ENCODE measurements at regions of chr16 and their contacts with region 1.

Region 1: DNA sequence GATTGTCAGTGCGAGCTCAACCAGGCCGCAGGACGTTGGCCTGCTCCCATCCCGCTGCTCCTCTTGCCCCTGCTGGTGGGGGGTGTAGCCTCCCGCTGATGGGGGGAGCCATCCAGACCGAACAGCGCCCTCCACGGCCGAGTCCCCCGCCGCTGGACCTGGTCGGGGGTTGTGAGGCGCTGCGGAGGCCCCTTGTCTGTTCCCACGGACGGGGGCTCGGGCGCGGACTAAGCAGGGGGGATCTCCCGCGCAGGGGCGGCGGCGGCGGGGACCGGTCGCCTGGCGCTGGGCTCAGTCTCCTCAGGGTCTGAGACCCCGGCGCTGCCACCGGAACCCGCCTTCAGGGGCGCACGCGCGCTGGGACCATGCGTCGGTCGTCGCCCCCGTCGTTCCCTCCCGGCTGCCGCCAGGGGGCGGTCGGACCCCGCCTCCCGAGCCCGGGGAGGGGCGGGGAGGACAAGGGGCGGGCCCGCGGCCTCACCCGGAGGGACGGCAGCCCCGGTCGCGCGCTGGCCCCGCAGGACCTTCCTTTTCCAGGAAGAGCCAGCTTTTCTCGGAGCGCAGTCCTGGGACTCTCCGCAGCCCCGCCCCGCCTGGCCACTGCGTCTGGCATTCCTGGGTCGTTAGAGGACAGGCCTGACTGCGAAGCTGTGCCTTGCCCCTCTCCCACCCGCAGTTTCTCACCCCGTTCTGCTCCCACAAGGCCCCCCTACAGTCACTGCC is 6.3 kb upstream of the IL32 start:
- DNase-seq: peak; percentile 64 to 96
- H3K4me3 ChIP-seq: peak overlapping the region; percentile 39 to 86 (median 67)
- H3K27ac ChIP-seq: no peak overlapping the region
- H3K4me1 ChIP-seq: peaks cover 5 to 19% (median 6%) of the 10 kb centered on the region in 4 experiments; a peak in 6 of 7 replicates
- H3K27me3 ChIP-seq: no peaks in the 10 kb centered on the region; a peak in 1 of 7 replicates
- CTCF ChIP-seq: peak; percentile 79 to 99 (median 88)
- EP300 ChIP-seq: 0 out of 3 replicates have a peak, but pooled peaks of 1 of the 2 experiments have one; percentile 53
- POLR2A ChIP-seq: peak in 1 of 2 experiments; percentile 39; a peak in 1 of 3 replicates
- RAD21 ChIP-seq: peak; percentile 81 to 95

Region 2: GRCh38 chr16:2701713-2702432 is 357.3 kb before region 1 on chr16:
- CTCF ChIA-PET with region 1: no interaction called
- POLR2A ChIA-PET with region 1: no interaction called
- DNase-seq: no peak
- H3K4me3 ChIP-seq: no peak overlapping the region
- H3K27ac ChIP-seq: no peak overlapping the region
- H3K4me1 ChIP-seq: no peaks in the 10 kb centered on the region
- H3K27me3 ChIP-seq: no peaks in the 10 kb centered on the region
- CTCF ChIP-seq: no peak
- EP300 ChIP-seq: no peak
- POLR2A ChIP-seq: no peak
- RAD21 ChIP-seq: no peak

Region 3: DNA sequence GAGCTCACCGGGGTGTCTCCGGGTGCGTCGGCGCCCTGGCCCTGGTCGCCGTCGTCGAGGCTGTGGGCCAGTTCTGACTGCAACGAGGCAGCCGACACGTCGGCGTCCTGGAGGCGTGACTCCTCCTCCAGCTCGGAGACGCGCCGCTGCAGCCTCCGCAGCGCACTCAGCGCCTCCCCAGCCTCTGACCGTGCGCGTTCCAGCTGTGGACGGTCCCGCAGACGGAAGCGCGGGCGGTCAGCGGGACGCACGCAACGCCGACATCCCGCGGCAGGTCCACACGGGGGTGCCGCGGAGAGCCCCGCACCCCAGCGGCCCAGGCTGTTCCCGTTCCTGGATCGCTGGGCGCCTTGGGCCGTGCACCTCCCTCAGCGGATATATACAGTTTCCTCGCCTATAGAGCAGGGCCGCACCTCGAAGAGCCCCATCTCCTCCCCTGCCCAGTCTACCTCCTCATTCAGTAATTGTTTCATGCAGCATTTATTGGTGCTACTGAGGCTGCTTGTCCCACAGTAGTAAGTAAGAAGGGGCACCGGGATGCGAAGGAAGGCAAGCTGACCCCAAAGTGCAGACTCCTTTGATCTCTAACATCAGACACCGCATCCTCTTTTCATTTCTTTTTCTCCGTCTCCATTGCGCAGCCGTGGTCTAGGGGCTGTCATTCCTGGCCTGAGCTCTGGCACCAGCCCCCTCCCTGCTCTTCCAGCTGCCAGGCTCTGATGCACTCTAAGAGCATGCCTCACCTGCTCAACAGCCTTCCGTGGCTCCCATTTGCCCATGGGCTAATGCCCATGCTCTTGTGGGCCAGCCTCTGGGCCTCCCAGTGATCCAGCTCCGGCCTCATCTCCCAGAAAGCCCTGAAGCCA is 29.4 kb before region 1 on chr16:
- CTCF ChIA-PET with region 1: interaction called, 88 read pairs
- POLR2A ChIA-PET with region 1: interaction called, 43 read pairs
- DNase-seq: peak in 1 of 2 experiments; percentile 41
- H3K4me3 ChIP-seq: no peak overlapping the region
- H3K27ac ChIP-seq: no peak overlapping the region
- H3K4me1 ChIP-seq: peaks cover 0 to 8% (median 6%) of the 10 kb centered on the region in 4 experiments; a peak in 5 of 7 replicates
- H3K27me3 ChIP-seq: no peaks in the 10 kb centered on the region
- CTCF ChIP-seq: no peak
- EP300 ChIP-seq: no peak
- POLR2A ChIP-seq: no peak
- RAD21 ChIP-seq: no peak

Region 4: GRCh38 chr16:3045357-3045728 is 13.8 kb before region 1 on chr16:
- CTCF ChIA-PET with region 1: interaction called, 25 read pairs
- POLR2A ChIA-PET with region 1: interaction called, 14 read pairs
- DNase-seq: peak in 1 of 2 experiments; percentile 73
- H3K4me3 ChIP-seq: peak overlapping the region; percentile 66 to 89 (median 80)
- H3K27ac ChIP-seq: no peak overlapping the region; the same call in 1 of the 2 replicates
- H3K4me1 ChIP-seq: peaks cover 0 to 3% (median 0%) of the 10 kb centered on the region in 4 experiments; a peak in 3 of 7 replicates
- H3K27me3 ChIP-seq: peaks cover 0 to 8% (median 3%) of the 10 kb centered on the region in 4 experiments; a peak in 6 of 7 replicates
- CTCF ChIP-seq: no peak
- EP300 ChIP-seq: no peak
- POLR2A ChIP-seq: no peak
- RAD21 ChIP-seq: no peak

Region 5: DNA sequence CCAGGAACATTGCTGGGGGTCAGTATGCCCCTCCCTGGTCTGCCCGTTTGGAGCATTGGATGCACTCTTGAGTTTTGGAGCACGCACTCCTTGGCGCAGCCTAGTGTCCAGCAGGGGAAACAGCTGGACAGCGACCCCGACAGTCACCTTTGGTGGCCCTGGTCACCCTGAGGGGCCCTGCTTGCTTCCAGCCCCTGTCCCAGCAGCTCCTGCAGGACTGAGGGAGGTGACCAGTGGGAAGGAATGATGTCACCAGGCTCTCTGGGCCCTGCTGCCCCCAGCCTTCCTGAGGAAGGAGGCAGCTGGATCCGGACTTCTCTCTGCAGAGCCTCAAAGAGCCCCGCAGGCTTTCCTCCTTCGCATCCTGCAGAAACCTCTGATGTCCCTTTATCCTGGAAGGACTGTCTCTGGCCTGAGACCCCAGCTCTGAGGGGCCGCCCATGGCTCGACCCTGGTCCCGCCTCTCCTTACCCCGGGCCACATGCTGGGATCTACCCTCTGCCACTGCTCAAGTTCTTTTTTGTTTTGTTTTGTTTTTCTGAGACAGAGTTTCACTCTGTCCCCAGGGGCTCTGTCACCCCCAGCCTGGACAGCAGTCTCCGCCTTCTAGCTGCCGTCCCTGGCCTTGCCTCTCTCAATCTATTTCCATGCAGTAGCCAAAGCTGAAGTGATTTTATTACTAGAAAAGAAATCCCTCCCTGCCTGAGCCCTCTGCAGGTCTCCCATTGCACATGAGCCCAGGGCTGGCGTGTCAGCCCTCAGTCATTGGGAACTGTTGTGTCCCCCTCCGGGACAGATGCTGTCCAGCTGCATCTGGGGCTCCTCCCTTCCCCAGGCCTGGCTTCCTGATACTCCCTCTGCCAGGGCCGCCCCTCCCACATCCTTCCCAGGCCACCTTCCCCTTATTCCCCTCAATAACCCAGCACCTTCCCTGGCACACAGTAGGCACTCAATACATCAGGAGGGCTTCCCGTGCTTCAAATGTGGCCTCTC is 28.4 kb after region 1 on chr16:
- CTCF ChIA-PET with region 1: interaction called, 30 read pairs
- POLR2A ChIA-PET with region 1: interaction called, 21 read pairs
- DNase-seq: no peak
- H3K4me3 ChIP-seq: no peak overlapping the region
- H3K27ac ChIP-seq: no peak overlapping the region; the same call in 1 of the 2 replicates
- H3K4me1 ChIP-seq: peaks cover 0 to 6% (median 5%) of the 10 kb centered on the region in 4 experiments; a peak in 6 of 7 replicates
- H3K27me3 ChIP-seq: no peaks in the 10 kb centered on the region
- CTCF ChIP-seq: peak; percentile 55 to 67 (median 65)
- EP300 ChIP-seq: no peak
- POLR2A ChIP-seq: peak in 1 of 2 experiments; percentile 72; a peak in 2 of 3 replicates
- RAD21 ChIP-seq: peak; percentile 25 to 51; a peak in 3 of 4 replicates

Region 6: GRCh38 chr16:3112058-3112880 is 53.1 kb after region 1 on chr16 and contains the start of gene ZNF205:
- CTCF ChIA-PET with region 1: interaction called, 20 read pairs
- POLR2A ChIA-PET with region 1: interaction called, 3 read pairs
- DNase-seq: peak in 1 of 2 experiments; percentile 92
- H3K4me3 ChIP-seq: peak within 1 kb of the TSS; percentile 85 to 93 (median 92)
- H3K27ac ChIP-seq: peak within 1 kb of the TSS; percentile 51; the same call in 1 of the 2 replicates
- H3K4me1 ChIP-seq: peaks cover 0 to 15% (median 8%) of the 10 kb centered on the region in 4 experiments; a peak in 5 of 7 replicates
- H3K27me3 ChIP-seq: no peaks in the 10 kb centered on the region
- CTCF ChIP-seq: 0 out of 4 replicates have a peak, but pooled peaks of 1 of the 3 experiments have one; percentile 14
- EP300 ChIP-seq: peak in 1 of 2 experiments; percentile 79; a peak in 1 of 3 replicates
- POLR2A ChIP-seq: no peak
- RAD21 ChIP-seq: peak; percentile 17 to 36; a peak in 2 of 4 replicates
- total RNA-seq, gene ZNF205: 17.0 and 19.1 TPM in 2 replicates